ENCODE measurements at regions of chr7 and their contacts with region 1.

Region 1: GRCh38 chr7:87416682-87417587 is 58.5 kb downstream of the ABCB4 start:
- DNase-seq: no peak
- ATAC-seq: peak; percentile 61

Region 2: GRCh38 chr7:86643561-86644281 is 773.2 kb before region 1 on chr7 and contains the start of gene GRM3:
- intact Hi-C with region 1: no loop called
- DNase-seq: peak; percentile 40
- ATAC-seq: peak; percentile 61
- total RNA-seq, gene GRM3: not detected

Region 3: DNA sequence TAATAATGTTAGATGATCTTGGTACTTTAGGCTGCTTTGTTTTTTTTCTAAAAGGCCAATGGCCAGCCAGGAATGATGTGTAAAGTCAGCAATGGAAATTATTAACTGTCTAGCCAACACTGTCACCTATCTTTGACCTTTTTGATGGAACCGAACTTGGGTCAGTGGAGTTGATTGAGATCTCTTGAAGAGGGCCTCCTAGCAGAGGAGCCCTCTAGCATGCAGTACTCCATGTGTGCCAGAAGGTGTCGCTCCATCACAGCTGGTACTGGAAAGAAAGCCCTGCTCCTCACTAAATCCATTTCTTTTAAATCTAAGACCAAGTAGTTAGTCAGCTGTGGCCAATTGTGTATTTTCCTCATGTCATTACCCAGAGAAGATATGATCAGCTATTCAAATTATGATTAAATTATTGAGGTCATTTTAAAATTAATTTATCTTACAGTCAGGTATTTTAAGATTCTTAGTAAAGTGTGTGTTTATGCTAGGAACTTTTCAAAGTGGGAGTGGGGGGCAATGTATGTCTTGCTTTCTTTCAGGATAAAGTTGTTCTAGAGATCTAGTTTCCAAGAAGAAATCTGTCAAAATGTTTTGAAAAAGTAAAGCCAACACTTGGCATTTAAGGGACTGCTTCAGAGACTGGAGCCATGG is 104.6 kb before region 1 on chr7:
- intact Hi-C with region 1: loop called (anchors 5 kb)
- DNase-seq: no peak
- ATAC-seq: peak; percentile 51

Region 4: GRCh38 chr7:87339373-87339897 is 77.5 kb before region 1 on chr7:
- intact Hi-C with region 1: no loop called
- DNase-seq: no peak
- ATAC-seq: no peak